ENCODE measurements at regions of chr2 and their contacts with region 1.

Region 1: GRCh38 chr2:42663106-42663780 is 94.8 kb downstream of the MTA3 start:
- DNase-seq: peak; percentile 39
- H3K4me3 Mint-ChIP-seq: no peak overlapping the region
- H3K27ac Mint-ChIP-seq: no peak overlapping the region
- H3K4me1 Mint-ChIP-seq: peaks cover 14% of the 10 kb centered on the region
- H3K27me3 Mint-ChIP-seq: no peaks in the 10 kb centered on the region

Region 2: DNA sequence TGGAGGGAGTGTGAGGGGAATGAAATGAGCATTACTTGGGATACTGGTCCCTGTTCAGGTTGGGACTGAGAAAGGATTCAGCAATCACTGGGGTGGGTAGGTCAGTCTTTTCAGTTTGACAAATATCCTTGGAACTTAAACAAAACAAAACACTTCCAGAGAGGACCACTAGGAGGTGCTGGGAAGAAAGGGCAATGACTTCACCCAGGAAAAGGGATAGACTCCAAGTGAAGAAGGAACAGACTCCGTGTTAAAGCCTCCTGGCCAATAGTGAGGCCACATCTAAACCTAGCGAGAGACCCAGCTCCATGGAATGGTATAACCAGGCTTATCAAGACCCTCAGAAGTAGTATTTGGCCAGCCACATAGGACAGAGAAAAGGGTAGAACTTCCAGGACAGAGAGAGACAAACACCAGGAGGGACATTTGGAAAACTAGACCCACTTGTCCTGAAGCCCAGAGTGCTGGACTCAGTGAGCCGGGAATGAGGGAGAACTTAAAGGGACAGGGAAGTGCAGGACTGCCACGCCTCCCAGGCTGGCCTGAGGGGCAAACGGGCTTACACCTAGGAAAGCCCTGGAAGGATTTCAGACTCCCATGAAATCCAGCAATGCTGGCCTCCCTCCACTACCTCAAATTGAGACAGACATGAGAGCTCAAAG is 149.9 kb before region 1 on chr2:
- intact Hi-C with region 1: loop called (anchors 5 kb)
- DNase-seq: no peak
- H3K4me3 Mint-ChIP-seq: no peak overlapping the region
- H3K27ac Mint-ChIP-seq: no peak overlapping the region
- H3K4me1 Mint-ChIP-seq: peaks cover 8% of the 10 kb centered on the region
- H3K27me3 Mint-ChIP-seq: no peaks in the 10 kb centered on the region

Region 3: DNA sequence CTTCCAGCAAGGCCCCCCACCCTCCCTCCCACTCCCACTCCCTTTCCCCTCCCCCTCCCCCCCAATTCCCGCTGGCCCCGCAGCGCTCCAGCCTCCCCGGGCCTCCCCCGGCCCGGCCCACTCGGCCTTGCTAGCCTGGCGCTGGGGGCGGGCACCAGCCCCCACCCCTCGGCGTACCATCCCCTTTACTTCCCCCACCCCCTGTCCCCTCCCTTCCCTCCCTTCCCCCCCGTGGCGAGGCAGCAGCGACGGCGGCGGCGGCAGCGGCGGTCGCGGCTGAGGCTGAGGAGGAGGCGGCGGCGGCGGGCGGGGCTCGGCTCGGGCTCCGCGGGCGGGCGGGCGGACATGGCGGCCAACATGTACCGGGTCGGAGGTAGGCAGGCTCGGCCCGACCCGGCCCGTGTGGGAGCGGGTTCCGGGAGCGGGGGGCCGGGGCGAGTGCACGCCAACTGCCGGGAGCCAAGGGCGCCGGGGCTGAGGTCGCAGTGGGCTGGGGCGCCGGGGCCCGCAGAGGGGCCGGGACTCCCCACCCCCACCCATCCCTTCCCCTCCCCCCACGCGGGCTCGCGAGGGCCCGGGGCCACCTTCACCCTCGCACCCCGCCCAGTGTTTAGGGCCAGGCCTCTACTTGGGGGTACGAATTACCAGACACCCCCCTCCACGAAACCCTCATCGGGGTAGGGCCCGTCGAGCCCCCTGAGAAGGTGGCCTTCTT is 94.7 kb before region 1 on chr2 and contains the start of gene MTA3:
- intact Hi-C with region 1: loop called (anchors 10 kb)
- DNase-seq: peak; percentile 61
- H3K4me3 Mint-ChIP-seq: peak within 1 kb of the TSS; percentile 98
- H3K27ac Mint-ChIP-seq: peak within 1 kb of the TSS; percentile 98
- H3K4me1 Mint-ChIP-seq: peaks cover 22% of the 10 kb centered on the region
- H3K27me3 Mint-ChIP-seq: no peaks in the 10 kb centered on the region
- total RNA-seq, gene MTA3: 39.7 and 39.8 TPM in 2 replicates

Region 4: GRCh38 chr2:42614838-42615237 is 48.4 kb before region 1 on chr2:
- intact Hi-C with region 1: no loop called
- DNase-seq: no peak
- H3K4me3 Mint-ChIP-seq: no peak overlapping the region
- H3K27ac Mint-ChIP-seq: no peak overlapping the region
- H3K4me1 Mint-ChIP-seq: peaks cover 20% of the 10 kb centered on the region
- H3K27me3 Mint-ChIP-seq: no peaks in the 10 kb centered on the region

Region 5: DNA sequence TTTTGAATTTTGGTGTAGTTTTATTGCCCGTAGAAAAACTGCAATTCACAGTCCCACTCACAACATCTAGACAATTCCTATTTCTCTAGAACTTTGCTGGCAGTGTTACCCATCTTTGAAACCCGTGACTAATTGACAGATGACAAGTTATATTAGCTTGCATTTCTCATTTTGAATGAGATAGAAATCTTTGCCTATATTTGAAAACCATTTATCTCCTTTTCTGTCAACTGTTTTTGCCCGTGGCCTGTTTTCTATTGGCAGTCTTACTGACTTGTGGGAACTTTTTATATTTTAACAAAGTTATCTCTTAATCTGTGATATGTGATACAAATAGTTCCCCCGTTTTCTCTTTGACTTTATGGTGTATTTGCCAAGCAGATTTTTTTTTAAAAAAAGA is 50.7 kb after region 1 on chr2:
- intact Hi-C with region 1: no loop called
- DNase-seq: no peak
- H3K4me3 Mint-ChIP-seq: no peak overlapping the region
- H3K27ac Mint-ChIP-seq: no peak overlapping the region
- H3K4me1 Mint-ChIP-seq: peaks cover 10% of the 10 kb centered on the region
- H3K27me3 Mint-ChIP-seq: no peaks in the 10 kb centered on the region